Posterior cingulate gyrus (tissue), 11 donors: ENCODE measurements at regions of chr4 and their contacts with region 1.

Region 1: DNA sequence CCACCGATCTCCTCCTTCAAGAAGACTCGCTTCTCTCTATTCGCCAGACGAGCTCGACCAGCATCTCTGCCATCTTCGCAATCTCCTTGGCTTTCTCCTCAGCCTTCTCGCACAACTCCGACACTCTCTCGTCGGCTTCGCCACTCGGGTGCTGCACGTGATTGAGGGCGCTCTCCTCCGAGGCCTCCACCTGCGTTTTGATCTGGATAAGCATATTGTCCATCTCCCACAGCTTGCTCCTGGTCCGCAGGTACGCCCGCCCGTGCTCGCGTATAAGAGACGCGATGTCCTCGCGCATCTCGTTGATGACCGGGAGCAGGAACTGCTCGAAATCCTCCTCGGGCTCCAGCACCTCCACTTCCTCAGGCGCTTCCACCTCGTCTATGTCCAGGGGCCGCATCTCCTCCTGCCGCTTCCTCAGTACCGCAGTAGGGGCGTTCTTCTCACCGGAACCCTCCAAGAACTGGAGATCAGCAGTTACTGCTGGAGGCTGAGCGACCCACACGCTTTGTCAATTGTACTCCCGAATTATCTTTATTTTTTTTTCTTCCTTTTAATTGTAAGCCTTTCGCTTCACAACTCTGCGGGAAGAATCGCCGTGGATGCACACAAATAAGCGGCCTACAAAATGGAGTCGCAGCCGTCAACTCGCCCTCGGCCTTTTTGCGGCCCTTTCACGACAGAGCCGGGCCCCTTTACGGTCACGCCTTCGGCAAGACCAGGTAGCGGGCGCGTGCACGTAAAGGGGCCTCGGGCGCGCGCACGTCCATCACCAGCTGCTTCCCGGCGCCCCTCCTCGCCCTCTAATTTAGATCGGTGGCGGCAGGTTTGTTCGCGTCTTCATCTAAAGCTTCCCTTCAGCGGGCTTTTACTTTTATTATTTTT is at the start of gene MRFAP1L1:
- DNase-seq: peak; percentile 92 to 99 (median 95)

Region 2: GRCh38 chr4:6640292-6641163 is 68.9 kb before region 1 on chr4 and contains the start of gene MRFAP1:
- intact Hi-C with region 1: loop called (anchors 2 kb)
- DNase-seq: peak; percentile 85 to 99 (median 90)

Region 3: DNA sequence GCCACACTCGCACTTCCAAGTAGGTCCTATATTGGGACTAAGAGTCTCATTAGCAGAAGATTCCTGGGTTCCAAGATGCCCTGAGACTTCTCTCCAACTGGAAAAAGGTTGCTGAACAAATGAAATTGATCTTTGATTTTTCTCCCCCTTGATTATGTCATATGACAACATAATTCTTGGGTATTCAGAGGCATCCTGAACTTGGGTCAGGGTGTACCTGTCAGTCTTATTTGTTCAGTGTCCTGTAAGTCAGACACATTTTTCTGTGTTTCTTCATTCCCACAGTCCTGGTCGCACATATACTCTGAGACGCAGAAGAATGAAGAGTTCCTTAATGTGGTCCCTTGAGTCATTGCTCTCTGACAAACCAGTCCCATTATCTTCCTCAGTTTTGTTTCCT is 29.6 kb before region 1 on chr4:
- intact Hi-C with region 1: loop called (anchors 2 kb)
- DNase-seq: no peak